CD4-positive, alpha-beta memory T cell (primary cell): ENCODE measurements at regions of chr5 and their contacts with region 1.

Region 1: DNA sequence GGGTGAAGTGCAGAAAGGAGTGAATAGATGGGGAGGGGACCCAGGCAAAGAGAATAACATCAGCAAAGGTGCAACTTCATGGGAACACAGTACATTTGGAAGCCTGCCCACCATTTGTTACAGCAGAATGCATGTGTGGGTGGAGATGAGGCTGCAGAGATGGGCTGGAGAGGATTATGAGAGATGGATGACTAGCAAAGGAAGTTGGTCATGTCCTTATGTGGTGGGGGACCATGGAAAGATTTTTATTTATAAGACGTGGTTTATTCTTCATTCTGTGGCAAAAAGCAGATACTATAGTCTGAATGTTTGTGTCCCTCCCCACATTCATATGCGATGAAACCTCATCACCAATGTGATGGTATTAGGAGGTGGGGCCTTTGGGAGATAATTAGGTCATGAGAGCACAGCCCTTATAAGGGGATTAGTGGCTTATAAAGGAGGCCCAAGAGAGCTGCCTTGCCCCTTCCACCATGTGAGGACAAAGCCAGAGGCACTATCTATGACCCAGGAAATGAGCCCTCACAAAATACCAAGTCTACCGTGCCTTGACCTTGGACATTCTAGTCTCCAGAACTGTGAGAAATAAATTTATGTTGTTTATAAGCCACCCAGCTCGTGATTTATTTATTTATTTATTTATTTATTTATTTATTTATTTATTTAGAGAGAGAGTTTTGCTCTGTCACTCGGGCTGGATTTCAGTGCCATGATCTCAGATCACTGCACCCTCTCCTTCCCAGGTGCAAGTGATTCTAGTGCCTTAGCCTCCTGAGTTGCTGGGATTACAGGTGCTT is 483.7 kb downstream of the RAB3C start:
- DNase-seq: no peak
- H3K4me3 ChIP-seq: no peak overlapping the region
- H3K4me3 Mint-ChIP-seq: no peak overlapping the region
- H3K27ac ChIP-seq: no peak overlapping the region
- H3K27ac Mint-ChIP-seq: no peak overlapping the region
- H3K4me1 ChIP-seq: no peaks in the 10 kb centered on the region
- H3K4me1 Mint-ChIP-seq: no peaks in the 10 kb centered on the region
- H3K27me3 ChIP-seq: no peaks in the 10 kb centered on the region
- H3K27me3 Mint-ChIP-seq: no peaks in the 10 kb centered on the region

Region 2: GRCh38 chr5:59079622-59080620 is 13.4 kb after region 1 on chr5:
- CTCF ChIA-PET with region 1: no interaction called
- POLR2A ChIA-PET with region 1: no interaction called
- intact Hi-C with region 1: loop called (anchors 2 kb)
- DNase-seq: no peak
- H3K4me3 ChIP-seq: no peak overlapping the region
- H3K4me3 Mint-ChIP-seq: no peak overlapping the region
- H3K27ac ChIP-seq: no peak overlapping the region
- H3K27ac Mint-ChIP-seq: peak overlapping the region in 2 of 7 donors; percentile 4 to 23
- H3K4me1 ChIP-seq: no peaks in the 10 kb centered on the region
- H3K4me1 Mint-ChIP-seq: no peaks in the 10 kb centered on the region
- H3K27me3 ChIP-seq: no peaks in the 10 kb centered on the region
- H3K27me3 Mint-ChIP-seq: peaks cover 1% of the 10 kb centered on the region in 2 donors

Region 3: GRCh38 chr5:59133682-59134261 is 67.2 kb after region 1 on chr5:
- CTCF ChIA-PET with region 1: no interaction called
- POLR2A ChIA-PET with region 1: no interaction called
- intact Hi-C with region 1: no loop called
- DNase-seq: no peak
- H3K4me3 ChIP-seq: no peak overlapping the region
- H3K4me3 Mint-ChIP-seq: peak overlapping the region in 1 of 8 donors; percentile 43
- H3K27ac ChIP-seq: no peak overlapping the region
- H3K27ac Mint-ChIP-seq: peak overlapping the region in 6 of 7 donors; percentile 59 to 95 (median 86)
- H3K4me1 ChIP-seq: peaks cover 34% of the 10 kb centered on the region
- H3K4me1 Mint-ChIP-seq: peaks cover 10 to 45% (median 13%) of the 10 kb centered on the region in 4 donors
- H3K27me3 ChIP-seq: no peaks in the 10 kb centered on the region
- H3K27me3 Mint-ChIP-seq: peaks cover 0 to 2% of the 10 kb centered on the region in 2 donors